ENCODE measurements at regions of chr14 and their contacts with region 1.

Region 1: DNA sequence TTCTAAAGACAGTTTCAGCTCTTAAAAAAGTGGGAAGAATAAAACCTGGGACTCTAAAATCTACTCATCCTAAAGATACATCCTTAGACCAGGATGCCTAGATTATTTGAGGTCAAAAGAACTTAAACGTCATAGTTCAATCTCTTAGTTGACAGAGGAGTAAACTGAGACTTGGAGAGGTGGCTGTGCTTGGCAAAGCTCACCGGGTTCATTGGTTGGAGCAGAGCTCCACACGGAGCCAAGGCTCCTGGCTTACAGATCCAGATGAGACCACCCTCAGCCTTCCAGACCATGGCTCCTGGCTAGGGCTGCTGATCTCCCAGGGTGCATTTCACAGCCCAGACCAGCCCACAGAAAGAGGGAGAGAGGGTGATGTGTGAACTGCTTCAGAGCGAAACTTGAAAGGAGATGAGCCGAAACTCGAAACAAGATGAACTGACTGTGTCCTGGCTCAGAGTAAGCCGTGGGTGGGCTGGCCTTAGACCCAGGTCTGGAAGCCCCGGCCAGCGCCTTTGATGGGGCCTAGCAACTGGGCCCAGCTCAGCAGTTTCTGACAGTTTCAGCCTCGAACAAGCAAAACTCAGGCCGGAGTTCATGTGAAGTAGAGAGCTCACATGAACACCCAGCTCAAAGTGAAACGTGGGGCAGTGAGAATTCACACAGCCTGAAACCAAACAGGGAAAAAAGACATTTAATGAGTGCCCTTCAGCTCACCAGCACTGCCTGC is 1044.8 kb downstream of the BCL11B start:
- DNase-seq: peak in 3 of 5 donors; percentile 22 to 24 (median 24)
- H3K4me3 ChIP-seq: peak overlapping the region in 1 of 2 donors; percentile 24
- H3K4me3 Mint-ChIP-seq: peak overlapping the region; percentile 56 to 89 (median 71)
- H3K27ac ChIP-seq: peak overlapping the region; percentile 55
- H3K27ac Mint-ChIP-seq: peak overlapping the region; percentile 89 to 97 (median 90)
- H3K4me1 ChIP-seq: peaks cover 96% of the 10 kb centered on the region
- H3K4me1 Mint-ChIP-seq: peaks cover 67 to 88% (median 77%) of the 10 kb centered on the region in 4 donors
- H3K27me3 ChIP-seq: no peaks in the 10 kb centered on the region
- H3K27me3 Mint-ChIP-seq: no peaks in the 10 kb centered on the region

Region 2: GRCh38 chr14:98173305-98173704 is 53.9 kb before region 1 on chr14:
- CTCF ChIA-PET with region 1: interaction called, 3 read pairs
- POLR2A ChIA-PET with region 1: interaction called, 12 read pairs
- intact Hi-C with region 1: loop called (anchors 1 kb)
- DNase-seq: peak; percentile 74 to 80 (median 77)
- H3K4me3 ChIP-seq: peak overlapping the region in 1 of 2 donors; percentile 33
- H3K4me3 Mint-ChIP-seq: peak overlapping the region; percentile 75 to 87 (median 81)
- H3K27ac ChIP-seq: peak overlapping the region; percentile 64
- H3K27ac Mint-ChIP-seq: peak overlapping the region; percentile 86 to 99 (median 94)
- H3K4me1 ChIP-seq: peaks cover 100% of the 10 kb centered on the region
- H3K4me1 Mint-ChIP-seq: peaks cover 87 to 100% (median 93%) of the 10 kb centered on the region in 4 donors
- H3K27me3 ChIP-seq: no peaks in the 10 kb centered on the region
- H3K27me3 Mint-ChIP-seq: no peaks in the 10 kb centered on the region

Region 3: DNA sequence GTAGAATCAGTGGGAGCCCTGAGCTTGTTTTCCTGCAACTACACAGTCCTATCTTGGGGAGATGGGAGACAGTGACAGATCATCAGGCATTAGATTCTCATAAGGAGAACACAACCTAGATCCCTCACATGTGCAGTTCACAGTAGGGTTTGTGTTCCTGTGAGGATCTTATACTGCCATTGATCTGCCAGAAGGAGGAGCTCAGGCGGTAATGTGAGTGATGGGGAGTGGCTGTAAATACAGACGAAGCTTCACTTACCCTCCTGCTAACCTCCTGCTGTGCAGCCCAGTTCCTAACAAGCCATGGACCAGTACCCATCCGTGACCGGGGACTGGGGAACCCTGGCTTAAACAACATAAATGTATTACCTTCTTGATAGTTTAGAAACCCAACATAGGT is 10.8 kb after region 1 on chr14:
- CTCF ChIA-PET with region 1: interaction called, 3 read pairs
- POLR2A ChIA-PET with region 1: interaction called, 11 read pairs
- intact Hi-C with region 1: no loop called
- DNase-seq: no peak
- H3K4me3 ChIP-seq: no peak overlapping the region
- H3K4me3 Mint-ChIP-seq: no peak overlapping the region
- H3K27ac ChIP-seq: no peak overlapping the region
- H3K27ac Mint-ChIP-seq: peak overlapping the region in 3 of 7 donors; percentile 18 to 69 (median 48)
- H3K4me1 ChIP-seq: peaks cover 7% of the 10 kb centered on the region
- H3K4me1 Mint-ChIP-seq: peaks cover 21 to 40% (median 25%) of the 10 kb centered on the region in 4 donors
- H3K27me3 ChIP-seq: no peaks in the 10 kb centered on the region
- H3K27me3 Mint-ChIP-seq: no peaks in the 10 kb centered on the region